Aorta (tissue), 5 donors: ENCODE measurements at regions of chr1 and their contacts with region 1.

Region 1: GRCh38 chr1:150464422-150464826 is 22.8 kb upstream of the TARS2 start:
- DNase-seq: peak in 1 of 2 donors; percentile 62
- ATAC-seq: peak; percentile 71
- H3K4me3 ChIP-seq: no peak overlapping the region
- H3K27ac ChIP-seq: no peak overlapping the region
- H3K4me1 ChIP-seq: no peaks in the 10 kb centered on the region
- H3K27me3 ChIP-seq: no peaks in the 10 kb centered on the region

Region 2: GRCh38 chr1:150235852-150236613 is 228.4 kb before region 1 on chr1 and contains the start of gene ANP32E:
- intact Hi-C with region 1: no loop called
- DNase-seq: peak; percentile 96 to 97
- ATAC-seq: peak; percentile 95
- H3K4me3 ChIP-seq: peak within 1 kb of the TSS; percentile 90 to 94
- H3K27ac ChIP-seq: peak within 1 kb of the TSS; percentile 77 to 93
- H3K4me1 ChIP-seq: no peaks in the 10 kb centered on the region
- H3K27me3 ChIP-seq: no peaks in the 10 kb centered on the region
- total RNA-seq, gene ANP32E: 32.9 to 37.1 TPM

Region 3: GRCh38 chr1:150259758-150260669 is 204.4 kb before region 1 on chr1:
- intact Hi-C with region 1: no loop called
- DNase-seq: no peak
- ATAC-seq: no peak
- H3K4me3 ChIP-seq: no peak overlapping the region
- H3K27ac ChIP-seq: no peak overlapping the region
- H3K4me1 ChIP-seq: peaks cover 0 to 3% of the 10 kb centered on the region in 2 donors
- H3K27me3 ChIP-seq: no peaks in the 10 kb centered on the region

Region 4: GRCh38 chr1:150613061-150613920 is 148.9 kb after region 1 on chr1:
- intact Hi-C with region 1: loop called in 1 of 2 experiments (anchors 10 kb)
- DNase-seq: no peak
- ATAC-seq: peak; percentile 72
- H3K4me3 ChIP-seq: no peak overlapping the region
- H3K27ac ChIP-seq: peak overlapping the region; percentile 43 to 75
- H3K4me1 ChIP-seq: peaks cover 2 to 9% of the 10 kb centered on the region in 2 donors
- H3K27me3 ChIP-seq: no peaks in the 10 kb centered on the region

Region 5: GRCh38 chr1:150629115-150629928 is 164.9 kb after region 1 on chr1 and contains the start of gene ENSA:
- intact Hi-C with region 1: loop called in 1 of 2 experiments (anchors 10 kb)
- DNase-seq: peak; percentile 98 to 99
- ATAC-seq: peak; percentile 99
- H3K4me3 ChIP-seq: peak within 1 kb of the TSS; percentile 35 to 62
- H3K27ac ChIP-seq: peak within 1 kb of the TSS; percentile 83 to 84
- H3K4me1 ChIP-seq: no peaks in the 10 kb centered on the region
- H3K27me3 ChIP-seq: no peaks in the 10 kb centered on the region
- total RNA-seq, gene ENSA: 129 to 178 TPM